Panc1 (cell line): ENCODE measurements at regions of chr2 and their contacts with region 1.

Region 1: DNA sequence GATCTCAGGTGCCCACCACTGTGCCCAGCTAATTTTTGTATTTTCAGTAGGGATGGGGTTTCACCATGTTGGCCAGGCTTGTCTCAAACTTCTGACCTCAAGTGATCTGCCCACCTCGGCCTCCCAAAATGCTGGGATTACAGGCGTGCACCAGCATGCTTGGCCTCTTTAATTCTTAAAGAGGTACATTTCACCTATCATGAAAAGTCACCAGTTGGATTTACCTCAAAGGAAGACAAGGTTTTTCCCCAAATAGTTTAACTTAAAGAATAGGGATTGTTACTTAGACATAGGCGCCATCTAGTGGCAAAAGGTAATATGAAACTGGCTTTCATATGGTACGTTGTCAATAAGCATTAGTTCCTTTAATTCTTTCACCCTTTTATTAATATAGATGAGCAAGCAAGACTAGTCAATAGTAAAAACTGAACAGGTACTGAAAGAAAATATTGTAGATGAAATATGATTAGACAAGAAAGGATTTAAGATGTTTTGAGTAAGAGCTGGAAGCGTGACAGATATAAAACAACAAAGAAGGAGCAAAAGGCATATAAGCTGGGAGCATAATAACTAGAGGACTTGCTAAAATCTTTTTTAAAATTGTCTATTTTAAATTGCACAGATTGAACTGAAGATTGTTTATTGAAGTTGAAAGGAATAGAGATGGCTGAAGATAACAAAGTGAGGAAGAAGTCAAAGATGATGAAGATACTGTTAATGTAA is 35.0 kb upstream of the PSMD14 start:
- DNase-seq: peak; percentile 39
- ATAC-seq: peak; percentile 80
- H3K4me3 ChIP-seq: no peak overlapping the region
- H3K27ac ChIP-seq: no peak overlapping the region
- H3K4me1 ChIP-seq: no peaks in the 10 kb centered on the region
- H3K27me3 ChIP-seq: no peaks in the 10 kb centered on the region
- CTCF ChIP-seq: peak; percentile 75

Region 2: DNA sequence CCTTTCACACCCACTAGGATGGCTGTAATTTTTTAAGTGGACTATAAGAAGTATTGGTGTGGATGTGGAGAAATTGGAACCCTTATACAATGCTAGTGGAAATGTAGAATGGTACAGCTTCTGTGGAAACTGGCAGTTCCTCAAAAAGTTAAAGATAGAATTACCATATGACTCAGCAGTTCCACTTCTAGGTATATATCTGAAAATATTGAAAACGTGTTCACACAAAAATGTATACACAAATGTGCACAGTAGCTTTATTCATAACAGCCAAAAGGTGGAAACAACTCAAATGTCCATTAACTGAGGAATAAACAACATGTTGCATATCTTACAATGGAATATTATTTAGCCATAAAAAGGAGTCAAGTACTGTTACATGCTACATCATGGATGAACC is 95.2 kb before region 1 on chr2:
- CTCF ChIA-PET with region 1: no interaction called
- POLR2A ChIA-PET with region 1: no interaction called
- in situ Hi-C with region 1: no loop called
- intact Hi-C with region 1: no loop called
- DNase-seq: no peak
- ATAC-seq: no peak
- H3K4me3 ChIP-seq: no peak overlapping the region
- H3K27ac ChIP-seq: no peak overlapping the region
- H3K4me1 ChIP-seq: no peaks in the 10 kb centered on the region; the same call in 1 of the 2 replicates
- H3K27me3 ChIP-seq: no peaks in the 10 kb centered on the region
- CTCF ChIP-seq: no peak

Region 3: GRCh38 chr2:161223139-161223732 is 50.0 kb before region 1 on chr2:
- CTCF ChIA-PET with region 1: no interaction called
- POLR2A ChIA-PET with region 1: no interaction called
- in situ Hi-C with region 1: no loop called
- intact Hi-C with region 1: loop called (anchors 2 kb)
- DNase-seq: peak; percentile 38
- ATAC-seq: no peak
- H3K4me3 ChIP-seq: no peak overlapping the region
- H3K27ac ChIP-seq: no peak overlapping the region
- H3K4me1 ChIP-seq: no peaks in the 10 kb centered on the region
- H3K27me3 ChIP-seq: no peaks in the 10 kb centered on the region
- CTCF ChIP-seq: peak; percentile 64; the same call in 1 of the 2 replicates

Region 4: DNA sequence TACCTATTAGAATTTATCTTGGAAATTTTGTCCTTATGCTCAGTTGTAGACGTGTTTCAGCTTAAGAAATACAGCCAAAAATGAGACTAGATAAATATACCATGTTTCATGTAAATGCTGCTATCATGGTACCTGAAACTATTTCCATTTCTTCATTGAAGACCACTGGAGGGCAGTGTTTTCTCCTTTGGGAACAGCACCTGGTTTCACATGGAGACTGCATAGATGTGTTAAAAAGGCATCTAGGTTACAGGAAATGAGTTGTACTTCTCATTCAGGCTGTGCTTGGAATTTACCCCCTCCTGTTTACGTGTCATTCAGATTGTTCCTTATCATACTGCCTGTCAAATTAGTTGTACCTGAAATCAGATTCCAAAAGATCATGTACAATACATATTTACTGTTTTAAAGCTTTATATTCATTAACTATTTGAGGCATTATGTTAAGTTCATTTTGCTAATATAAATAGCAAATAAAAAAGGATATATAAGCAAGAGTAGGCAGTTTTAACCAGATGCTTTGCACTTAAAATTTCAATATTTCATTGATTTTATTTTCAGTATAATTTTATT is 22.2 kb before region 1 on chr2:
- CTCF ChIA-PET with region 1: interaction called, 4 read pairs
- POLR2A ChIA-PET with region 1: no interaction called
- in situ Hi-C with region 1: no loop called
- intact Hi-C with region 1: loop called (anchors 1 kb)
- DNase-seq: peak; percentile 45
- ATAC-seq: peak; percentile 96
- H3K4me3 ChIP-seq: no peak overlapping the region
- H3K27ac ChIP-seq: no peak overlapping the region
- H3K4me1 ChIP-seq: no peaks in the 10 kb centered on the region
- H3K27me3 ChIP-seq: peaks cover 4% of the 10 kb centered on the region
- CTCF ChIP-seq: peak; percentile 75; the same call in 1 of the 2 replicates